Cardiac septum (tissue), 1 donor: ENCODE measurements at regions of chr4 and their contacts with region 1.

Region 1: DNA sequence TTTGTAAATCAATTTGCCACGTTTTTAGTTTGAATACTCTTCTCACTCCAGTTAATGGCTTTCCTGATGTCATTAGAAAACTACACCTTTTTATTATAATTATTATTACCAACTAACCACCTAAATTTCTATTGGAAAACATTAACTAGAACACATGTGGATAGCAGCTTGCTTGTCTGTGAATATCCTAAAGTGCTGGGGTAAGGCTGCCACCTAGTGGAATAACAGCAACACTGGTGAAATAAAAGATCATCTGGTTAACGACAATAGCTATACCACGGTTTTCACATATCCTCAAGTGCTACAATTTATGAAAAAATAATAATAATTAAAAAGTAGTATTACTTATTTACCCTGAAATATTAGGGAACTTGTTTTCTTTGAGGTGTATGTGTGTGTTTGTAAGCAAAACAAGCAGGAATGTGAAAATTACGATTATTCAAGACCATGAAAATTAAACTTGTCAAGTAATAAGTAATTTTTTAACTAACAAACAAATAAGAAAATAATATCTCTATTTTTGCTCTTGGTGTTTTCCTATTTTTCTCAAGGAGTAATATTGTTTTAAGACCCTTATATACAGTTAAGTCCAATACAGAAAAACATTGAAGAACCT is 130.1 kb upstream of the TECRL start:
- DNase-seq: no peak

Region 2: GRCh38 chr4:64158648-64159326 is 380.6 kb before region 1 on chr4:
- intact Hi-C with region 1: loop called (anchors 5 kb)
- DNase-seq: no peak

Region 3: GRCh38 chr4:64271601-64272081 is 267.7 kb before region 1 on chr4:
- intact Hi-C with region 1: loop called (anchors 5 kb)
- DNase-seq: peak; percentile 77

Region 4: DNA sequence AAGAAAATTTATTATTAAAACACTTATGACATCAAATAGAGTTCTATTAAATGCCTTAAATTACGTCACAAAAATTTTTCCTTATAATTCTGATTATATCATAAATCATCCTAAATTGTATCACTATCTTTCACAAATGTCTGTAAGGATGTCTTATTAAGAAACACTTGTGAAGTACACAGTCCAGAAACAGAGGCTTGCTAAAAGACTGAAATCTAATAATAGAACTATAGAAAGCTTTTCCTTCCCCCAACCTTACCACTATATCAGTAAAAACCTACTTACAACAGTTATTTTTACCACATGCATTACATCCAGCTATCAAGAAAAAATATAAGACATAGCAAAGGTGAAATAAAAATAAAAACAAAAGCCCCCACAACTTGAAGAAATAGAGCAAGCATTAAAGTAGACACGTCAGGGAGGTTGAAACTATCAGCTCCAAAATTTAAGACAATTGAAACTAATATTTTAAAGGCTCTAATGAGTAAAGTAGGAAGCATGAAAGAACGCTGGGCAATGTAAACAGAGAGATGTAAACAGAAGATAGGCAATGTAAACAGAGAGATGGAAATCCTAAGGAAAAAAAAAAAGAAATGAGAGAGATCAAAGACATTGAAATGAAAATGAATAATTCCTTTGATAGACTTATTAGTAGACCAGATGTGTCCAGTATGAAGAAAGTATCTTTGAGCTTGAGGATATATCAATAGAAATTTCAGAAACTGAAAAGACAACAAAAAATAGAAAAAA is 35.2 kb before region 1 on chr4:
- intact Hi-C with region 1: no loop called
- DNase-seq: no peak

Region 5: GRCh38 chr4:65918212-65918611 is 1378.9 kb after region 1 on chr4:
- intact Hi-C with region 1: no loop called
- DNase-seq: no peak